ENCODE measurements at regions of chr7 and their contacts with region 1.

Region 1: GRCh38 chr7:87345166-87345927 is at the start of gene CROT:
- DNase-seq: peak; percentile 89 to 98
- H3K4me3 ChIP-seq: peak within 1 kb of the TSS; percentile 52 to 73
- H3K27ac ChIP-seq: peak within 1 kb of the TSS; percentile 74 to 83
- H3K4me1 ChIP-seq: peaks cover 0 to 11% of the 10 kb centered on the region in 2 donors
- H3K27me3 ChIP-seq: no peaks in the 10 kb centered on the region
- CTCF ChIP-seq: peak in 1 of 3 experiments; percentile 8
- total RNA-seq, gene CROT: 3.0 TPM

Region 2: DNA sequence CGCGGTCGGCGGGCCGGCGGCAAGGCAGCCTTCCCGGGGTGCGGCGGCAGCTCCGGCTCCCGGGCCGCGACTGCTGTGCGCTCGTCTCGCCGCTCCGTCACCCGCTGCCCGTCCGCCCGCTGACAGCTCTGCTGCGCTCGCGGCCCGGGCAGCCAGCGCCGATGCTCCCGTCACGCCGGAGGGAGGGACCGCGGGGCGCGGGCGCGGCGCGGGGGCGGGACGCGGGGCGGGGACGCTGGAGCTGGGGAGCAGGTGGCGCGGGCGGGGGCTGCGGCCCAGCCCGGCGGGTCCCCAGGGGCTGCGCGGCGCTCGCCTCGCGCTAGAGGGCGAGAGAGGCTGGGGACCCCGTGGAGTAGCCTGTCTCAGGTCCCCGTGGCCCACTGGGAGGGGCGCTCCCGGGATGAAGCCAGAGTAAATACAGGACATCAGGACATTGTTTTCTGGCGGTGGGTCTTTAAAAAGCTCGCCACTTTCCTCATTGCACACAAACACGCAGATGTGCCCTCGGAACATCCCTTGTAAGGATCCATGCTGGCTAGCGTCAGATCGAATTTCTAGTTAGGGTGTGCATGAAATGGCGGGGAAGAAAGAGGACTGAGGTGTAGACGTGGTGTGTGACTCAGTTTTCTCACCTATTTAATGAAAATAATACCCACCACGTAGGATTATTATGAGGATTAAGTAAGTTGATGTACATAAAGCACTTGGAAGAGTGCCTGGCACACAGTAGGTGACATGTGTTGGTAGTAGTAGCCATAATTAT is 285.6 kb before region 1 on chr7 and contains the start of gene ELAPOR2:
- intact Hi-C with region 1: loop called (anchors 10 kb)
- DNase-seq: peak; percentile 33 to 87
- H3K4me3 ChIP-seq: peak within 1 kb of the TSS; percentile 72 to 98
- H3K27ac ChIP-seq: peak within 1 kb of the TSS in 1 of 2 donors; percentile 45
- H3K4me1 ChIP-seq: peaks cover 0 to 9% of the 10 kb centered on the region in 2 donors
- H3K27me3 ChIP-seq: no peaks in the 10 kb centered on the region
- CTCF ChIP-seq: peak; percentile 44 to 58 (median 53)
- total RNA-seq, gene ELAPOR2: 1.1 TPM

Region 3: GRCh38 chr7:87312215-87312865 is 33.0 kb before region 1 on chr7:
- intact Hi-C with region 1: loop called (anchors 5 kb)
- DNase-seq: no peak
- H3K4me3 ChIP-seq: no peak overlapping the region
- H3K27ac ChIP-seq: no peak overlapping the region
- H3K4me1 ChIP-seq: no peaks in the 10 kb centered on the region
- H3K27me3 ChIP-seq: no peaks in the 10 kb centered on the region
- CTCF ChIP-seq: peak; percentile 85 to 98 (median 97)

Region 4: DNA sequence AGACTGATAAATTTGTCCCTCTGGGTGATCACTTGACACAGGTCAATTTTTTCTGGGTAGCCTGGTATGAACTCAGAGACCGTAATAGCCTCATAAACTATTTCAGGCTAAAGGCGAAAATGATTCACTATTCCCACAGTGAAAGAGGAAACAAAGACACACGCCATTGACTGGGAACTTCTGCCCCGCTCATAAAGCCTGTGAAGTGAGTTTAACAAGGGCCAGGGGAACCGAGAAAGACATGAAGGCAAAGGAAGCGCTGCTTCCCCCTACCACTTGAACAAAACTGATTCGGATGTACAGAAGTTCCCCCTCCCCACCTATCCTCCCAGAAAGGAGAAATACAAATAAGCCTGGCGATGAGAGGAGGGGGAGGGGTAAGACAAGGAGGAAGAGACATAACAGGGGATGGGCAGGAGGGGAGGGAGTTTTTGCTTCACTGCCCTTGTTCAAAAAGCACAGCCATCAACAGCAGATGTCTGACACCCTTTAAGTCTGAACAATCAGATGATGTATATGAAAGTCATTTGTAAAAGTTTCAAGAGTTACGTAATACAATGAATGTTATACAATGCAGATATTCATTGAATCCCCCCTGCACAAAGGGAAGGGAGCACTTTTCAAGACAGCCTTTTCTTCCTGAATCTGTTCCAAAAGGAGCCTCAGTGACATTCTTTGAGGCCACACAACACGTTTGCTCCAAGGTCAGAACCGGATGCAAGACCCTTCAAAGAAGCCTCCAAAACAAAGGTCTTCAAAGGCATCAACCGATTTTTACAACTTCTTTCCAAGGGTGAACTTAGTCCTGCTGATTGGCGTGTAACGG is 129.4 kb after region 1 on chr7:
- intact Hi-C with region 1: loop called (anchors 2 kb)
- DNase-seq: peak in 1 of 2 donors; percentile 73
- H3K4me3 ChIP-seq: peak overlapping the region; percentile 72 to 88
- H3K27ac ChIP-seq: peak overlapping the region; percentile 23 to 66
- H3K4me1 ChIP-seq: no peaks in the 10 kb centered on the region
- H3K27me3 ChIP-seq: no peaks in the 10 kb centered on the region
- CTCF ChIP-seq: no peak

Region 5: DNA sequence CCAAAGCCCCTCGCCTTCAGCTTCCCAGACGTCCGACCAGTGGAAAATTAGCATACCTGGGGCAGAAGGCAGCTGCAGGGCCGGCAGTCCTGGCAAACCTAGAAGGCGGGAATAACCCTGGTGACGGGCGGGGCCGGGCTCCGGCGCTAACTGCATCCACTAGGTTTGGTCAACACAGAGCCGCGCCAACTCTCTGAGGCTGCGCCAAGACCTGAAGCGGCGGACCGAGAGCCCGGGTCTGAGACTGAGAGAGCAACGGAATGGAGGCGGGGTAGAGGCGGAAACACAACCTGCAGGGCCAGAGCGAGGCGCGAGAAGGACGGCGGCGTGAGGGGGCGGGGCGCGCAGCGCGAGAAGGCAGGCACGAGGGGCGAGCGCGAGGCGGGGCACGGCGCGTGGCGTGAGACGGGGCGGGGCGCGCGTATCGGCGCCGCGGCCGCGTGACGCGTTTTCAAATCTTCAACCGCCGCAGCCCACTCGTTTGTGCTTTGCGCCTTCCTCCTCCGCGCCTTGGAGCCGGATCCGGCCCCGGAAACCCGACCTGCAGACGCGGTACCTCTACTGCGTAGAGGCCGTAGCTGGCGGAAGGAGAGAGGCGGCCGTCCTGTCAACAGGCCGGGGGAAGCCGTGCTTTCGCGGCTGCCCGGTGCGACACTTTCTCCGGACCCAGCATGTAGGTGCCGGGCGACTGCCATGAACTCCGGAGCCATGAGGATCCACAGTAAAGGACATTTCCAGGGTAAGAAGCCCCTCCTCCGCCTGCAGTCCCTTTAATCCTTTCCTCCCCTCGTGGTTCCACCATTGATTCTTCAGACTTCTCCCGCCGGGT is 530.9 kb after region 1 on chr7 and contains the starts of genes DBF4 and SLC25A40:
- intact Hi-C with region 1: loop called (anchors 5 kb)
- DNase-seq: peak; percentile 78 to 96
- H3K4me3 ChIP-seq: peak within 1 kb of the TSS; percentile 63 to 76
- H3K27ac ChIP-seq: peak within 1 kb of the TSS; percentile 90 to 91
- H3K4me1 ChIP-seq: peaks cover 0 to 4% of the 10 kb centered on the region in 2 donors
- H3K27me3 ChIP-seq: no peaks in the 10 kb centered on the region
- CTCF ChIP-seq: no peak
- total RNA-seq, gene DBF4: not detected
- total RNA-seq, gene SLC25A40: 4.0 TPM